PC-9 (cell line): ENCODE measurements at regions of chr6 and their contacts with region 1.

Region 1: DNA sequence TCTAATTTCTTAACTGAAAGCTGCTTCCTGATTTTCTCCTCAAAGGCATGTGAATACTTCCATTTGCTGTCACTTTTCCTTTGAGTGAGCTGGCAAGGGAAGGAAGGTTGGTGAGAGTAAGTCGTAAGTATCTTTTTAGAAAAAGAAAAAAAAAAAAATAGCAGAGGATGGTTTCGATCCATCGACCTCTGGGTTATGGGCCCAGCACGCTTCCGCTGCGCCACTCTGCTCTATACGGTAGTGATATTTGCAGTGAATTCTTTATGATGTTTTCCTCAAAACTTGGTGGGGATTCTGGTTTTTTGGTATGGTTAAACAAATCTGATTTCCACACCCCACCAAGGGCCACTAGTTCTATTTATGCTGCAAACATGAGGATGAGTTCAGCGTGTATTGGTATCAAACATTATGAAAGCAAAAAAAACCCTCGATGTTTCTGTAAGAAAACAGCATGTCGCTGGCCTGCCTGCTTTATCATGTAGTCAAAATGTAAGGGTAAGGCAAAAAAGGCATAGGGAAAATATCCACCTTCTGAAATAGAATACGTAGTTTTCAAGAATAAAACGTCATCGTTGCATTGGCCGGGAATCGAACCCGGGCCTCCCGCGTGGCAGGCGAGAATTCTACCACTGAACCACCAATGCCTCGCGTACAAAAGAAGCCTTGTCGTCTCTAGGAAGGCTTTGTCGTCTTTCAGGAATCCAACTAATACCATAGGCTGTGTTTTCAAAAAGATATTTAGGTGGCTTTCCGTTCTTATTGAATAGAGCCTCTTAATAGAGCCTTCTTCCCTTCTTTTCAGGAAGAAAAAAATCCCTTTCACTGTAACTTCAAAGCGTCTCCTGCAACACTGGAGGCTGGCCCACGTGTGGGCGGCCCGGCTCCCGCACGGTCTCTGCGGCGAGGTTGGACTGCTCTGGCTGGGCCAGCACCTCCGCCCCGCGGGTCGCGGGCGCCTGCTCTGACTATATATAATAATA is 9.6 kb downstream of the OR2B2 start:
- DNase-seq: peak; percentile 76 to 86
- H3K4me3 ChIP-seq: peak overlapping the region; percentile 73
- H3K27ac ChIP-seq: peak overlapping the region; percentile 74
- H3K4me1 ChIP-seq: peaks cover 9% of the 10 kb centered on the region
- H3K27me3 ChIP-seq: no peaks in the 10 kb centered on the region
- CTCF ChIP-seq: no peak

Region 2: GRCh38 chr6:26613689-26614683 is 1288.6 kb before region 1 on chr6:
- CTCF ChIA-PET with region 1: no interaction called
- POLR2A ChIA-PET with region 1: no interaction called
- intact Hi-C with region 1: no loop called
- DNase-seq: no peak
- H3K4me3 ChIP-seq: no peak overlapping the region
- H3K27ac ChIP-seq: no peak overlapping the region
- H3K4me1 ChIP-seq: no peaks in the 10 kb centered on the region
- H3K27me3 ChIP-seq: no peaks in the 10 kb centered on the region
- CTCF ChIP-seq: no peak

Region 3: DNA sequence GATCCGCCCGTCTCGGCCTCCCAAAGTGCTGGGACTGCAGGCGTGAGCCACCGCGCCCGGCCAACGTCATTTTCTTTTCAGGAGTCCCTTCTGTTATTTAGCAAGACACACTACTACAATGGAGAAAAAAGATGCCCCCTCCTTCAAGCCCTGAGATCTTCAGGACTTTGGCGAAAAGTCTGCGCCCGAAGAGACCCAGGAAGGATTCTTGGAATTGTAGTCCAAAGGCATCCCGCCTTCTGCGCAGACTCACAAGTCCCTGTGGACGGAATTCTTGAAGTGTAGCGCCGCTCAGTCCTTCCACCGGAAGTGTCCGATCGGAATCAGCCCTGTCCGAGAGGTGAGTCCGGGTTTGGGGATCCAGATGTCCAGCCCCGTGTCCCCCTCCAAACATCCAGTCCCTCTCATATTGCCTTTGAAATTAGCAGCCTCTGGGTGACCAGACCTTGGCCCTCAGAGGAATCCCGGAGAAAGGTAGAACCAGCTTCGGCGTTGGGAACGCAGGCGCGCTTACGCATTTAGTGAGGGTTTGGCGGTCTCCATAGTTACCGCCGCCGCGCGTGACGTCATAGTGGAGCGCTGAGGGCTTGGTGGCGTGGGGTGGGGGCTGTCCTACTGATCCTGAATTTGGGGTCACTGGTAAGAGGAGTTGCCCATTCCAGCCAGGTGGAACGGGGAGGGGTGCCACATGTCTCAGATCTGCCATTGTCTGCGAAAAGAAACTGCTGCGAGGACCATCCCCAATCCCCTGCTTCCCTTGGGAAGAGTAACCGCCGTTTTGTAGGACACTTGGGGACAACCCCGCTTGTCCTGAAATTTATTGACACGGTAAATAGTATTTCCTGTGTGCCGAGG is 178.2 kb after region 1 on chr6:
- CTCF ChIA-PET with region 1: no interaction called
- POLR2A ChIA-PET with region 1: no interaction called
- intact Hi-C with region 1: loop called (anchors 2 kb)
- DNase-seq: peak; percentile 89 to 95
- H3K4me3 ChIP-seq: peak overlapping the region; percentile 86
- H3K27ac ChIP-seq: peak overlapping the region; percentile 98
- H3K4me1 ChIP-seq: peaks cover 15% of the 10 kb centered on the region; the same call in 1 of the 2 replicates
- H3K27me3 ChIP-seq: no peaks in the 10 kb centered on the region
- CTCF ChIP-seq: no peak

Region 4: DNA sequence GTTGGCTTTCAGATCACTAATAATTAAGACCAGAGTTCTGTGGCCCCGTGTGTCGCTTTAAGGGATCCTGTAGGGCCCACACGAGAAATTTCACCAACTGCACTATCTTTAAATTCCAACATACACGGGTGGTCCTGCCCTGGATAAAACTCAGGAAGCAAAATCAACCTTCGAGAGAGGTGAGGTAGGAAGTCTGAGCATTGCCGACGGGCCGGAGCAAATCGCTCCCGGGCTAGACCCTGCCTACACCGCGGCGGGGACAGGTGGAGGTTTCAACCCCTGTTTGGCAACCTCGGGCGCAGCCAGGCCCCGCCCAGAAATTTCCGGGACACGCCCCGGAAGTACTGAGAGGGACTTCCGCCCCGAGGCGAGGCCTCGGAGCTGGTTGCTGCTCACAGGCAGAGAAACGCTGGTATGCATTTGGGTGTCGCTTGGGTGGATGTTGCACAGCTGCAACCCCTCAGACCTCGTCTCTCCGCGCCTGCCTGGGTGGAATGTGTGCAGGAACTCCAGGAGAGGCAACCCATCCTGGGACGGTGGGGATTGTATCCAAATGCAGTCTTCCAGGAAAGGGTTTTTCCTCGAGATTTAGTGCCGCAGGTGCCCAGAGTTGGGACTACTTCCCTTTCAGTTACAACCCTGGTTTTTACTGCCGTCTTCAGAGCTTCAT is 258.9 kb after region 1 on chr6:
- CTCF ChIA-PET with region 1: no interaction called
- POLR2A ChIA-PET with region 1: interaction called, 10 read pairs
- intact Hi-C with region 1: no loop called
- DNase-seq: peak; percentile 70 to 93
- H3K4me3 ChIP-seq: peak overlapping the region; percentile 74
- H3K27ac ChIP-seq: no peak overlapping the region
- H3K4me1 ChIP-seq: peaks cover 6% of the 10 kb centered on the region; the same call in 1 of the 2 replicates
- H3K27me3 ChIP-seq: no peaks in the 10 kb centered on the region
- CTCF ChIP-seq: no peak

Region 5: GRCh38 chr6:28212510-28213212 is 310.0 kb after region 1 on chr6:
- CTCF ChIA-PET with region 1: no interaction called
- POLR2A ChIA-PET with region 1: no interaction called
- intact Hi-C with region 1: loop called (anchors 2 kb)
- DNase-seq: peak; percentile 84 to 93
- H3K4me3 ChIP-seq: peak overlapping the region; percentile 64
- H3K27ac ChIP-seq: peak overlapping the region; percentile 70
- H3K4me1 ChIP-seq: peaks cover 21% of the 10 kb centered on the region
- H3K27me3 ChIP-seq: no peaks in the 10 kb centered on the region
- CTCF ChIP-seq: no peak

Region 6: GRCh38 chr6:28383235-28384142 is 480.9 kb after region 1 on chr6:
- CTCF ChIA-PET with region 1: no interaction called
- POLR2A ChIA-PET with region 1: no interaction called
- intact Hi-C with region 1: loop called (anchors 2 kb)
- DNase-seq: peak; percentile 74 to 92
- H3K4me3 ChIP-seq: peak overlapping the region; percentile 64
- H3K27ac ChIP-seq: no peak overlapping the region
- H3K4me1 ChIP-seq: peaks cover 8% of the 10 kb centered on the region; the same call in 1 of the 2 replicates
- H3K27me3 ChIP-seq: no peaks in the 10 kb centered on the region
- CTCF ChIP-seq: peak; percentile 68

Region 7: GRCh38 chr6:28707387-28708282 is 805.0 kb after region 1 on chr6:
- CTCF ChIA-PET with region 1: no interaction called
- POLR2A ChIA-PET with region 1: no interaction called
- intact Hi-C with region 1: no loop called
- DNase-seq: no peak
- H3K4me3 ChIP-seq: no peak overlapping the region
- H3K27ac ChIP-seq: no peak overlapping the region
- H3K4me1 ChIP-seq: no peaks in the 10 kb centered on the region
- H3K27me3 ChIP-seq: no peaks in the 10 kb centered on the region
- CTCF ChIP-seq: no peak